GM12878 (cell line): ENCODE measurements at regions of chr19 and their contacts with region 1.

Region 1: GRCh38 chr19:2455851-2456570 is 748 bp downstream of the LMNB2 start:
- DNase-seq: no peak
- ATAC-seq: peak; percentile 80
- H3K4me3 ChIP-seq: peak overlapping the region; percentile 99
- H3K27ac ChIP-seq: peak overlapping the region; percentile 90
- H3K4me1 ChIP-seq: peaks cover 19% of the 10 kb centered on the region
- H3K27me3 ChIP-seq: no peaks in the 10 kb centered on the region
- CTCF ChIP-seq: no peak
- EP300 ChIP-seq: no peak
- POLR2A ChIP-seq: peak; percentile 26; the same call in 1 of the 2 replicates
- RAD21 ChIP-seq: no peak

Region 2: DNA sequence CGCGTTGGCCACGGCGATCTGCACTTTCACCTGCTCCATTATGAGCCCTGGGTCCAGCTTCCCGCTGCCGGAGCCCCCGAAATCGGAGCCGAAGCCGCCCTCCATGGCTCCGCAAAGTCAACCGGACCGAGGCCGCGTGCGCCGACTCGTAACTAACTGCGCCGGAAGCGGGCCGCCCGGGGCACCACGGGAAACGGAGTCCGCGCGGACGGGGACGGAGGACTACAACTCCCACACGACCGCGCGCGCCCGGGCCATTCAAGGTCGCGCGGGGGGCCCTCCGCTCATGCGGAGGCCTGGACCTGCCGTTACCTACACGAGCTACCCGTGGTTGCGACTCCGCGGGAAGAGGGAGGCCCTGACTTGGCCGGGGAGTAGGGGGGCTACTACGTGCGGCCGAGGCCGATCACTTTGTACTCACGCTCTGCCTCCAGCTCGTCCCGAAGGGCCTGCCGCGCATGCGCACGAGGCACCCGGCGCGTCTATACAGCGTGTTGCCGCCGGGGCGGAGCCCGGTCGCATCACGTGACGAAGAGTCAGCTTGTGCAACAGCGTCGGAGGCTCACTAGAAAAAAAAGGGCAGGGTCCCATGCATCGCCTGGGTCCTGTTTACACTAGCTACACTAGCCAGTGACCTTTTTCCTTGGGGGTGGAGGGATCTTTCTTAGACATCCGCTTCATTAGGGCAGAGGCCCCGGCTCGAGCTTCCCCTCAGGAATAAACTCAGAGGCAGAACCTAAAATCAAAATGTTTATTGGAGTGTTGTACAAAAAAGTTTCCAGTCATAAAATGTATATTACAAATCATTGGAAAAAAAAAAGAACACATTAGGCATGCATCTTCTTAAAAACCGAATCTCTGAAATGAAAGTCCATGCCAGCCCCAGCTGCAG is 28.3 kb before region 1 on chr19 and contains the start of gene TIMM13:
- CTCF ChIA-PET with region 1: no interaction called
- POLR2A ChIA-PET with region 1: interaction called, 11 read pairs
- RAD21 ChIA-PET with region 1: no interaction called
- SMC1A ChIA-PET with region 1: no interaction called
- in situ Hi-C with region 1: no loop called
- intact Hi-C with region 1: loop called (anchors 1 kb)
- DNase-seq: peak; percentile 84
- ATAC-seq: peak; percentile 95
- H3K4me3 ChIP-seq: peak within 1 kb of the TSS; percentile 94
- H3K27ac ChIP-seq: peak within 1 kb of the TSS; percentile 95
- H3K4me1 ChIP-seq: peaks cover 11% of the 10 kb centered on the region
- H3K27me3 ChIP-seq: no peaks in the 10 kb centered on the region
- CTCF ChIP-seq: no peak
- EP300 ChIP-seq: no peak
- POLR2A ChIP-seq: peak; percentile 87
- RAD21 ChIP-seq: no peak
- polyA plus RNA-seq, gene TIMM13: 17.9 to 46.3 TPM

Region 3: DNA sequence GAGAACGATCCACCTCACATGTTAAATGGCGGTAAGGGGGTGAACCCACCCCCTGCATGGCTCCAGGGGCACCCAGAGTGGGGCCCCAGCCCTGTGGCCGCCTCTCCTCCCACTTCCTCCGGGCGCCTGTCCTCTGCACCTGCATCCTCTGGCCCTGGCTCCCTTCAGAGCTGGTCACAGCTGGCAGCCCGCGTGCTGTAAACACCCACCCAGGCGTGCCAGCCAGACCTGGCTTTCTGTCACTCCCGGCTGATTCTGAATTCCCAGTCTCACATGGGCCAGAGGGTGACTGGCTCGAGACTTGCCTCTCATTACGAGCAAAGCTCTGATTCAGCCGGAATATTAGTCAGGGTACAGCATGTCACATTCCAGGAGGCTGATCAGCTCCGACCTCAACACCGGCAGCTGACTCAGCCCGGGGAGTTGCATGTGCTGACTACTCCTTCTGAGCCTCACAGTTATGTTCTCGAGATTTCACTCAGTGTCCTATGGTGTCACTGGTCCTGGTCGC is 171.4 kb after region 1 on chr19:
- CTCF ChIA-PET with region 1: no interaction called
- POLR2A ChIA-PET with region 1: interaction called, 11 read pairs
- RAD21 ChIA-PET with region 1: interaction called, 4 read pairs
- SMC1A ChIA-PET with region 1: no interaction called
- in situ Hi-C with region 1: no loop called
- intact Hi-C with region 1: no loop called
- DNase-seq: no peak
- ATAC-seq: peak; percentile 52
- H3K4me3 ChIP-seq: no peak overlapping the region
- H3K27ac ChIP-seq: peak overlapping the region; percentile 45
- H3K4me1 ChIP-seq: peaks cover 55% of the 10 kb centered on the region
- H3K27me3 ChIP-seq: no peaks in the 10 kb centered on the region
- CTCF ChIP-seq: no peak
- EP300 ChIP-seq: no peak
- POLR2A ChIP-seq: peak; percentile 54; the same call in 1 of the 2 replicates
- RAD21 ChIP-seq: no peak